ENCODE measurements at regions of chr1 and their contacts with region 1.

Region 1: DNA sequence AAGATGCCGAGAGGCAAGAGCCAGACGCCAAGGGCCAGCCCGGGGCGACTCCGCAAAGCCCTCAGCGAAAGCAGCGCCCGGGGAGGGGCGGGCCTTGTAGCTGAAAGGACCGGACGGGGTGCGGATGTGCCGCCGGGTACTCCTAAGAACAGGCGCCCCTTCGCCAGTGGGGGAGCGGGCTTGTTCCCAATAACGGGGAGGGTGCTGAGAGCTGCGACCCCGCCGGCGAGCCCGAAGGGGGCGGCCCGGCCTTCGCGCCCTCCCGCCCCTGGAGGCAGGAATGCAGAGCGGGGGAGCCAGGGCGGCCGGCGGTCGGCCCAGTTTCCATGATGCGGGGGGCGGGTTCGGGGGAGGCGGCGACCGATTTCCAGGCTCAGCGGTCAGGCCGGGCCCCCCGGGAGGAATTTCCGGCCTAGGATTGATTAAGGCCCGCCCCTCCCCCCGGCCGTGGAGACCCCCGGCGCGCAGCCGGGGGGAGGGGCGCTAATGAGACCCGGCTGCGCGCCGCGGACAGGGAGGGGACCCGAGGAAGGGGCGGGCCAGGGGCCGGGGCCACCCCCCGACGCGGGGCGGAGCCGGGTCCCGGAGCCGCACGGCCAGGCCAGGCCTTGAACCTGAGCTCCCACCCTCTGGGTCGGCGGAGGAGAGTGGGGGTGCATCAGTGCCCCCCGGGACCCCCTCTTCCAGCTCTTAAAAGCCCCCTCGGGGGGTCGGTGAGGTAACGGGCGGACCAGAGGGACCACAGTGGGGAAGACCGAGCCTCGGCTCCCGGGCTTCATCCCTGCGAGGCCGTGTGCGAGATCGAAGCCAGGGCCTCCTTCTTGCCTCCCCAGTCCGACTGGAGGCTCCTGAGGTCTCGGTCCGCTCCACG is 898 bp upstream of the TMEM200B start:
- DNase-seq: peak; percentile 60
- ATAC-seq: peak; percentile 74
- H3K4me3 ChIP-seq: peak overlapping the region; percentile 54
- H3K27ac ChIP-seq: peak overlapping the region; percentile 81
- H3K4me1 ChIP-seq: peaks cover 17% of the 10 kb centered on the region
- H3K27me3 ChIP-seq: no peaks in the 10 kb centered on the region
- CTCF ChIP-seq: peak; percentile 77
- POLR2A ChIP-seq: peak; percentile 67; the same call in 1 of the 2 replicates
- RAD21 ChIP-seq: no peak

Region 2: DNA sequence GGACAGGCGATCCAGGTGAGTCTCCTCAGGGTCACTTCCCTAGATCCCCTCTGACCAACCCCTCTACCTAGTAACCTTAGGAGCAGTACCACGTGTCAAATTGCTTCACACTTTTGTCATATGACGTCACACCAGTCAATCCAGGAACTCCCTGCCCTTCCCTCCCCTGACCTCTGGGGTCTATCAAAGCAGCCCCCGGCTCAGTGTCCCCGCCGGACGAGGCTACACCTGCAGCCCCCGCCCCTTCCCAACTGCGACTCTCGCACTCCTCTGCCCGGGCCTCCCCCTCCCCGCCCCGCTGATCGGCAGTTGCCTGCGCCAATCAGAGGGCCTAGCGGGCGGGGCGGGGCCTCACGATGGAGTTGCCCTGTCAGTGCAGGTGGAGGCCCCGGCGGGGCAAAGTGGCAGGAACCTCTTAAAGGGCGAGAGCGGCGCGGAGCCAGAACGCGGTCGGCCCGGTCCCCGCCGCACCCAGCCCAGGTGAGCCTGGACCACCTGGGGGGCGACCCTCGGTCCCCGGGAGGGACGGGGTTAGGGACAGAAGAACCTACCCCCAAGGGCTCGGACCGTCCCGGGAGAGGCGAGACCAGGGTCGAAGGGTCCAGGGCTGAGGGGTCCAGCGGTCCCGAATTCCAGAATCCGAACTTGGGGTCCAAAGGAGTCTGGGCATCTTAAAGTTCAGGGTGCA is 237.7 kb before region 1 on chr1:
- CTCF ChIA-PET with region 1: no interaction called
- POLR2A ChIA-PET with region 1: interaction called, 3 read pairs
- dilution Hi-C with region 1: no loop called
- in situ Hi-C with region 1: no loop called
- intact Hi-C with region 1: loop called (anchors 5 kb)
- DNase-seq: peak; percentile 48
- ATAC-seq: peak; percentile 83
- H3K4me3 ChIP-seq: peak overlapping the region; percentile 65
- H3K27ac ChIP-seq: no peak overlapping the region; the same call in 1 of the 2 replicates
- H3K4me1 ChIP-seq: peaks cover 11% of the 10 kb centered on the region
- H3K27me3 ChIP-seq: peaks cover 8% of the 10 kb centered on the region
- CTCF ChIP-seq: no peak
- POLR2A ChIP-seq: no peak
- RAD21 ChIP-seq: no peak

Region 3: DNA sequence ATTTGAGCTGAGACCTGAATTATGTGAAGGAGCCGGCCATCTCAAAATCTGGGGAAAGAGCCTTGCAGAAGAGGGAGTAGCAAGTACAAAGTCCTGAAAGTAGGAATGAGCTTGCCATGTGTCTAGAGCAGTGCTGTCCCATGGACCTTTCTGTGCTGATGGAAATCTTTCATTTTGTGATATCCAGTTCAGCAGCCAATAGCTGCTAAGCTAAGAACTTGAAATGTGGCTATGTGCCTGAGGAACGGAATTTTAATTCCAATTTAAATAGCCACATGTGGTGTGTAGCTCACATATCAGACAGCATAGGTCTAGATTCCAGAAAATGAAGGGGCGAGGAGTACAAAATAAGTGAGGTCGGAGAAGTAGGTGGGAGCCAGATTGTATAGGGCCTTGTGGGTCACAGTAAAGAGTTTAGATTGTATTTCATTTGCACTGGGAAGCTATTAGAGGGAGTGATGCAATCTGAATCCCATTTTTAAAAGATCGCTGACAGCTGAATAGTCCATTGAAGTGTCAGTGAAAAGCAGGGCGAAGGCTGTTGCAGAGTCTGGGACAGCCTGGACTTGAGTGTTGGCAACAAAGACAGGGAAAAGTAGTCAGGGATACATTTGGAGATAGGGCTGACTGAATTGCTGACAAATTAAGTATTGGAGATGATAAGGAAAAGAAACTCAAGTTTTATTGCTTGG is 81.2 kb before region 1 on chr1:
- CTCF ChIA-PET with region 1: no interaction called
- POLR2A ChIA-PET with region 1: no interaction called
- dilution Hi-C with region 1: no loop called
- in situ Hi-C with region 1: no loop called
- intact Hi-C with region 1: no loop called
- DNase-seq: no peak
- ATAC-seq: no peak
- H3K4me3 ChIP-seq: no peak overlapping the region
- H3K27ac ChIP-seq: no peak overlapping the region
- H3K4me1 ChIP-seq: no peaks in the 10 kb centered on the region; the same call in 1 of the 2 replicates
- H3K27me3 ChIP-seq: no peaks in the 10 kb centered on the region
- CTCF ChIP-seq: no peak
- POLR2A ChIP-seq: no peak
- RAD21 ChIP-seq: no peak

Region 4: DNA sequence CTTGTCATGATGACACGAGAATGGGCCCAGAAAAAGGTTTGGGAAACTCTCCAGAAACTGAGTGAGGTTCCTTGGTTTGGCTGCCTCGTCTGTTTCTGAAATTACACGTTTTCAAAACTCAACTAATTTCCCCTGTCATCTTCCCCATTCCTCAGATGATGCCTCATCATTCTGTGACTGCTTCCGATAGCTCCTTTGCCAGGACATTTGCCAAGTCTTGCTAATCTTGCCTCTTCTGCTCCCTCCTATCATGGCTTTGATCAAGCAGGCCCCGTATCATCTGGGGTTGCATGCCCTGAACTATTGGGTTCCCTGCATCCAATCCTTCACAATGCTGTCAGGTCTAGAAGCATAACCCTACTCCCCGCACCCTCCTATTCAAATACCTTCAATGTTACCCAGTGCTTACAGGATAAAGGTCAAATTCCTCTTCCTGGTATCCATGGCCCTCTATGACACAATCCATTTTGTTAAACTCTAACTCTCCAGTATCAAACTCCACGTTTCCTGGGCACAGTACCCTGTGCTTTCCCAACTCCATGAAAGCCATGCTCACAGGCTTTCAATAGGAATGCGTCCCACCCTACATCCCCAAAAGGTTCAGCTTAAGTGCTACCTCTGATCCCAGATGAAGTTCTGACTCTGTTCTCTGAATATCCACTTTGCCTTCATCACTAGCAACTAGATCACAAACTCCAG is 21.3 kb after region 1 on chr1:
- CTCF ChIA-PET with region 1: interaction called, 3 read pairs
- POLR2A ChIA-PET with region 1: no interaction called
- dilution Hi-C with region 1: no loop called
- in situ Hi-C with region 1: no loop called
- intact Hi-C with region 1: loop called (anchors 2 kb)
- DNase-seq: peak; percentile 95
- ATAC-seq: peak; percentile 68
- H3K4me3 ChIP-seq: no peak overlapping the region
- H3K27ac ChIP-seq: peak overlapping the region; percentile 73
- H3K4me1 ChIP-seq: peaks cover 10% of the 10 kb centered on the region
- H3K27me3 ChIP-seq: no peaks in the 10 kb centered on the region
- CTCF ChIP-seq: no peak
- POLR2A ChIP-seq: no peak
- RAD21 ChIP-seq: no peak

Region 5: DNA sequence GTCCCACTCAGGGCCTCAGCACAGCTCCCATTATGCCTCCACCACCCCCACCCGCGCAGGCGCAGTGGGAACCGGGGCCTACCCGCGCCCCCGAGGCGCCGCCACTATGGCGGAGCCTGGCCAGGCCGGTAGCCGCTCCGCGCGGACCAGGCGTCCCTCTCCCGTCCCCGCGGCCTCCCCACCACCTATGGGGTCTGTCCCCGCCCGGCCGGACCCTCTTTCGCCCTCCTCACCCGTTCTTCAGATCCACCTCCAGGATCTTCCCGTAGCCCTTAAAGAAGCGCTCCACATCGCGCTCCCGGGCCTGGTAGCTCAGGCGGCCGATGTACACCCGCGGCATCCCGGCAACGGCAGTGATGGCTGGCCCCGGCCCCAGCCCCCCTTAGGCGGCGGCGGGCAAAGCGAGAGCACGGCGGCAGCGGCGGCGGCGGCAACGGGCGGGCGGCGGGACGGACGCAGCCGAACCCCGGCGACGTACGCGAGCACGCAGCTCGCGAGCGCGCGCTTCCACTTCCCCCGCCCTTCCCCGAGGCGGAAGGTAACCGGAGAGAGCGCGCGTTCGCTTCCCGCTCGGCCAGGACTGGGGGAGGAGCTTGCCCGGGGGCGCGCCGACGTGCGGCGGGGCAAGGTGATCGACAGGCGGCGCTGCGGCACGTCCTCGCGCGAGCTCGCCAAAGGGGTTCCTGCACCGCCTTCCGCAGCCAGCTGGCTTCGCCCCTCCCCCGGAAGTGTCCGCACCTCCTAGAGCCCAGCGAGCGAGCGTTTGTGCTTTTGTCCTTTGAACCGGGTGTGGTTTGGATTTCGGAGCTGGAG is 57.0 kb after region 1 on chr1 and contains the start of gene SRSF4:
- CTCF ChIA-PET with region 1: no interaction called
- POLR2A ChIA-PET with region 1: interaction called, 3 read pairs
- dilution Hi-C with region 1: no loop called
- in situ Hi-C with region 1: no loop called
- intact Hi-C with region 1: loop called (anchors 2 kb)
- DNase-seq: peak; percentile 98
- ATAC-seq: peak; percentile 94
- H3K4me3 ChIP-seq: peak within 1 kb of the TSS; percentile 84
- H3K27ac ChIP-seq: peak within 1 kb of the TSS; percentile 97
- H3K4me1 ChIP-seq: peaks cover 10% of the 10 kb centered on the region
- H3K27me3 ChIP-seq: no peaks in the 10 kb centered on the region
- CTCF ChIP-seq: peak; percentile 82
- POLR2A ChIP-seq: peak; percentile 90
- RAD21 ChIP-seq: peak; percentile 59
- total RNA-seq, gene SRSF4: 20.8 and 38.6 TPM in 2 replicates

Region 6: GRCh38 chr1:29197585-29197924 is 73.0 kb after region 1 on chr1:
- CTCF ChIA-PET with region 1: interaction called, 3 read pairs
- POLR2A ChIA-PET with region 1: no interaction called
- dilution Hi-C with region 1: no loop called
- in situ Hi-C with region 1: no loop called
- intact Hi-C with region 1: loop called (anchors 1 kb)
- DNase-seq: peak; percentile 62
- ATAC-seq: peak; percentile 37
- H3K4me3 ChIP-seq: no peak overlapping the region
- H3K27ac ChIP-seq: peak overlapping the region; percentile 42; the same call in 1 of the 2 replicates
- H3K4me1 ChIP-seq: peaks cover 26% of the 10 kb centered on the region
- H3K27me3 ChIP-seq: no peaks in the 10 kb centered on the region
- CTCF ChIP-seq: peak; percentile 51
- POLR2A ChIP-seq: no peak
- RAD21 ChIP-seq: peak; percentile 61

Region 7: DNA sequence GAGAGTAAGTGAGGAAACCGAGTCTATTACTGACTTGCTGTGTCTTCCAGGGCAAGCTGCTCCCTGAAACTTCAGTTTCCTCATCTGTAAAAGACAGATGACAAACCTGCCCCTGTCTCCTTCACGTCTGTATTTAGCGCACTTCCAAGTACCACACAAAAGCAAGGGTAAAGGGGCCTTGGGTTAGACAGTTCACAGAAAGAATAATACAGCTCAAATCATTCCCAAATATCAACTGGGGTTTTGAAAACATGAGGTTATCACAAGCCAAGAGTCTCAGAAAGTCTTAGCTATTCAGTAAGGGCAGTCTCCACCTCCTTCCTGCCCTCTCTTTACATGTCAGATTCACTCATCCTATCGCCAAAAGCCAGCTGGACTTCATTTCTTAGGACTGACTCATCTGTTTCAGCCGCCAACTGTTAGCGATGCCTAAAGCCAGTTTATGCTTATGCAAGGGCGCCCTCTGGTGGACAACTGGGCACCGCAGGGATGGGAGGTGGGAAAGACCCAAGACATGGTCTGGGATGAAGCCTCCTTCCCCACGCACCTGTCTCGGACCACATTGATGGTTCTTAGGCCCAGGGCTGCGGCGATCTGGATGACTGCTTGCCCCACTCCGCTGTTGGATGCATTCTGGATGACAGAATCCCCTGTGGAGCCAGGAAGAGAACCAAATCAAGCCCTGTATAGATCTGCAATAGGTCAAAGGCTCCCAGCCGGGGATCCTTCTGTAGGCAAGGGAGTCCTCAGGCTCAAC is 78.2 kb after region 1 on chr1:
- CTCF ChIA-PET with region 1: interaction called, 3 read pairs
- POLR2A ChIA-PET with region 1: no interaction called
- dilution Hi-C with region 1: no loop called
- in situ Hi-C with region 1: no loop called
- intact Hi-C with region 1: loop called (anchors 1 kb)
- DNase-seq: peak; percentile 99
- ATAC-seq: peak; percentile 93
- H3K4me3 ChIP-seq: no peak overlapping the region
- H3K27ac ChIP-seq: peak overlapping the region; percentile 85
- H3K4me1 ChIP-seq: peaks cover 16% of the 10 kb centered on the region
- H3K27me3 ChIP-seq: no peaks in the 10 kb centered on the region
- CTCF ChIP-seq: peak; percentile 98
- POLR2A ChIP-seq: peak; percentile 52; the same call in 1 of the 2 replicates
- RAD21 ChIP-seq: peak; percentile 99

Region 8: DNA sequence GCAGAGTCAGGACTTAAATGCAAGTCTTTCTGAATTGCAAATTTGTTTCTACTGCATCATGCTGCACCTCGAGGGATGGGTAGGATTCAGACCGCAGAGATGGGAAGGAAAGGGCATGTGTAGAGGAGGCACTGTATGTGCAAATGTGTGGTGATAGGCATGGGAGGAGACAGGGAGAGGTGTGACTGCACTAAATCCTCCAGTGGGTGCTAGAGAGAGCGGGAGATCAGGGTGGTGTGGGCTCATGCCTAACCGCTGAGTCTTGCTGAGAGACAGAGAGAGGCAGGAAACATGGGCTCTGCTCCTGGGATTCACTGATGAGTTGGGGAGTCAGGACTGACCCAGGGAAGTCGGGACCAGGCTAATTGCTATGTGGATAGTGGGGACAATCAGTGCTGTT is 172.8 kb after region 1 on chr1:
- CTCF ChIA-PET with region 1: no interaction called
- POLR2A ChIA-PET with region 1: no interaction called
- dilution Hi-C with region 1: no loop called
- in situ Hi-C with region 1: no loop called
- intact Hi-C with region 1: no loop called
- DNase-seq: peak; percentile 13
- ATAC-seq: no peak
- H3K4me3 ChIP-seq: no peak overlapping the region
- H3K27ac ChIP-seq: no peak overlapping the region
- H3K4me1 ChIP-seq: no peaks in the 10 kb centered on the region
- H3K27me3 ChIP-seq: no peaks in the 10 kb centered on the region
- CTCF ChIP-seq: no peak
- POLR2A ChIP-seq: no peak
- RAD21 ChIP-seq: no peak